Activated CD4-positive, alpha-beta memory T cell treated with anti-CD3 and anti-CD28 coated beads, Interleukin-2, amount 10 ng/mL, durations not matched to agents 7 days and 5 days (primary cell): ENCODE measurements at regions of chr2 and their contacts with region 1.

Region 1: GRCh38 chr2:219278655-219279516 is at the start of gene DNAJB2:
- DNase-seq: peak; percentile 99
- H3K4me3 Mint-ChIP-seq: peak within 1 kb of the TSS; percentile 87
- H3K27ac Mint-ChIP-seq: peak within 1 kb of the TSS; percentile 93
- H3K4me1 Mint-ChIP-seq: peaks cover 42% of the 10 kb centered on the region
- H3K27me3 Mint-ChIP-seq: peaks cover 3% of the 10 kb centered on the region
- total RNA-seq, gene DNAJB2: 57.0 to 59.7 TPM

Region 2: DNA sequence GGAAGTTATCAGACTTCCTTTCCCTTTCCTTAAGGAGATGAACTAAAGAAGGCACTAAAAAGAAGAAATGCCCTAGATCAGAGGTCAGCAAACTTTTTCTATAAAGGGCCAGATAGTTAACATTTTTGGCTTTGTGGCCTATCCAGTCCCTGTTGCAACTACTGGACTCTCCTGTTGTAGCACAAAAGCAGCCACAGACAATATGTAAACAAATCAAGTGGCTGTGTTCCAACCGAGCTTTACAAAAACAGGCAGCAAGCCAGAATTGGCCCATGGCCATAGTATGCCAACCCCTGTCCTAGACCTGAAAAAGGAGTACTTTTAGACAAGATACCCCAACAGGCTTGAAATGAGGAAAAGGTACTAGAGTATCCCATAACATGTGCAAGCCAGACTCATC is 129.2 kb before region 1 on chr2:
- CTCF ChIA-PET with region 1: no interaction called
- POLR2A ChIA-PET with region 1: no interaction called
- DNase-seq: no peak
- H3K4me3 Mint-ChIP-seq: no peak overlapping the region
- H3K27ac Mint-ChIP-seq: no peak overlapping the region
- H3K4me1 Mint-ChIP-seq: no peaks in the 10 kb centered on the region
- H3K27me3 Mint-ChIP-seq: no peaks in the 10 kb centered on the region

Region 3: DNA sequence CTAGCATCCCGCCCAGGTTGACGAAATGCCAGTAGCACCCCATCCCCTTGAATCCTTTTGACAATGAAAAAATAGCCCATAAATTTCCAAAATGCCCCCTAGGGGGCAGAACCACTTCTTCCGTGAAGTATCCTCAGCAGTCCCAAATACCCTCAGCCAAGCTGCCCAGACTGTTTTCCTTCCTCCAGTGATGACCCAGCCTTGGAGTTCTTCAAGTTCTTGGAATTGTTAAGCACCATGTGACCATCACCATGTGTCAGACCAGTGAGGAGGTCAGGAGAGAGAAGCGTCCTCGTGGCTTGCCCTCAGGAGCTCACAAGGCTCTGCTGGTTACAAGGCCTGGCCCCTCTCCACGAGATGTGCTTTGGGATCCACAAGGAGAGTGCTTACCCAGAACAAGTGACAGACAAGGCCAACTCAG is 107.6 kb before region 1 on chr2:
- CTCF ChIA-PET with region 1: interaction called, 14 read pairs
- POLR2A ChIA-PET with region 1: interaction called, 26 read pairs
- DNase-seq: peak; percentile 24
- H3K4me3 Mint-ChIP-seq: no peak overlapping the region
- H3K27ac Mint-ChIP-seq: no peak overlapping the region
- H3K4me1 Mint-ChIP-seq: peaks cover 42% of the 10 kb centered on the region
- H3K27me3 Mint-ChIP-seq: no peaks in the 10 kb centered on the region

Region 4: DNA sequence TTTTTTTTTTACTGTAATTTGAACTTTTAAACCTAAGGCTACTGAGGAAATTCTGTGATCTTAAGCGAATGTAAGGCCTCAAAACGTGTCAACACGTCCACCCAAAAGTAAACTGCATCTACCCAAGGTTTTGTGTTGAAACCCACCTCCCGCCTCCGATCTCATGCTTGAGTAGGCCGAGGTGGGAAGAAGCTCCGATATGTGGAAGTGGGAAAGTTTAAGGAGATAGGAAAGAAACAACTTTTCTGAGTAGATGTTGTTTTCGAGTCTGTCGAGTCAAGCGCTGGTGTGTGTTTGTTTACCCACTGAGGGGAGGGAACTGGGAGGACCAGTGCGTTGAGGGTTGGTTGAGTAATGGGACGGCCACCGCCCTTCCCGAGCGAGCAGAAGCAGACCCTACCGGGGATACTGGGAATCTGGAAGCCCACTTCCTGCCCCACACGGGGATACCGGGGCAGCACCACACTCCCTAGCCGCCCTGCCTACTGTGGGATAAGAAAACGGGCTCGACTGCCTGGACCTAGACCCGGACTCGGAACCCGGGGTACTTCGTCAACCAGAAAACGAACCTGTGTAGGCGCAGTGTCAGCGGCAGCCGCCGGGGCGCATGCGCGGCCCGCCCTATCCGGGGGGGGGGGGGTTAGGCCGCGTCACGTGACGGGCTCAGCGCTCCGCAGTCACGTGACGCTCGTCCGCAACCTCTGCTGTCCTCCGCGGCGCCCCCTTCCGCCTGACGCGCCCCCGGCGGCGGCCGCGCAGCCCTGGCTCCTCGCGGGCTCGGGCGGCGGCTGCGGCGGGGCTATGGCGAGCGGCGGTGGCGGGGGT is 101.1 kb before region 1 on chr2 and contains the start of gene RETREG2:
- CTCF ChIA-PET with region 1: interaction called, 5 read pairs
- POLR2A ChIA-PET with region 1: interaction called, 26 read pairs
- DNase-seq: peak; percentile 84
- H3K4me3 Mint-ChIP-seq: peak within 1 kb of the TSS; percentile 85
- H3K27ac Mint-ChIP-seq: peak within 1 kb of the TSS; percentile 99
- H3K4me1 Mint-ChIP-seq: peaks cover 72% of the 10 kb centered on the region
- H3K27me3 Mint-ChIP-seq: no peaks in the 10 kb centered on the region
- total RNA-seq, gene RETREG2: 107 to 113 TPM

Region 5: DNA sequence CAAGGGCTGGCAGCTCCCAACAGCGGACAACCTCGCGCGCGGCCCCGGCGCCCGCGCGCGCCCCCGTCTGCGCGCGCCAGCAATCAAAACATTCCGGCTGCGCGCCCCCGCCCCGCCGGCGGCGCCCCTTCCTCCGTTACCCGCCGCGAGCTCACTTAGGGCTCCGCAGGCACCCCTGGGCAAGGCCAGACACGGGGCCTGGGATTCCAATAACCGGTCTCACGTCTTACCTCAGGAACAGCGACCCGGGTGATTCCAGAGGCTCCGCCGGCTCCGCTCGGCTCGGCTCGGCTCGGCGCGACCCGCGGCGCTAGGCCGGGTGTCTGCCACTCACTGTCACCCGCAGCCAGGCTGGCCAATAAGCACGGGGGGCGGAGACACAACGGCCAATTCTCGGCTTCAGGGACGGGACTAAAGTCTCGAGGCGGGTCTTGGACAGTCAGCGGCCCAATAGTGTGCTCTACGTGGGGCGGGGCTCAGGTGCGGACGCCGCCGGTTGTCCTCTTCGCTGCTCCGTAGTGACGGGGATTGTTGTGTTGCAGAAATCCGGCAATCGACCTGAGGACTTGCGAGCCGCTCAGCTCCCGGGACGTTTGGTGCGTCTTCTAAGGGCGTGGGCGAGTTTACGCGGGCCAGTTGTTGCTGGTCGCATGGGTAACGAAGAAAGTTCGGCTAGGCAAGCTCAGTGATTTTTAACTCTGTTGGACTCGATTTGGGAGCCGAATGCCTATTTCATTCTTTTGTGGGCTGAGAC is 49.4 kb before region 1 on chr2 and contains the starts of genes ANKZF1 and ATG9A:
- CTCF ChIA-PET with region 1: interaction called, 15 read pairs
- POLR2A ChIA-PET with region 1: interaction called, 14 read pairs
- DNase-seq: peak; percentile 99
- H3K4me3 Mint-ChIP-seq: peak within 1 kb of the TSS; percentile 99
- H3K27ac Mint-ChIP-seq: peak within 1 kb of the TSS; percentile 100
- H3K4me1 Mint-ChIP-seq: peaks cover 56% of the 10 kb centered on the region
- H3K27me3 Mint-ChIP-seq: no peaks in the 10 kb centered on the region
- total RNA-seq, gene ANKZF1: 121 to 122 TPM
- total RNA-seq, gene ATG9A: 58.9 to 60.7 TPM

Region 6: DNA sequence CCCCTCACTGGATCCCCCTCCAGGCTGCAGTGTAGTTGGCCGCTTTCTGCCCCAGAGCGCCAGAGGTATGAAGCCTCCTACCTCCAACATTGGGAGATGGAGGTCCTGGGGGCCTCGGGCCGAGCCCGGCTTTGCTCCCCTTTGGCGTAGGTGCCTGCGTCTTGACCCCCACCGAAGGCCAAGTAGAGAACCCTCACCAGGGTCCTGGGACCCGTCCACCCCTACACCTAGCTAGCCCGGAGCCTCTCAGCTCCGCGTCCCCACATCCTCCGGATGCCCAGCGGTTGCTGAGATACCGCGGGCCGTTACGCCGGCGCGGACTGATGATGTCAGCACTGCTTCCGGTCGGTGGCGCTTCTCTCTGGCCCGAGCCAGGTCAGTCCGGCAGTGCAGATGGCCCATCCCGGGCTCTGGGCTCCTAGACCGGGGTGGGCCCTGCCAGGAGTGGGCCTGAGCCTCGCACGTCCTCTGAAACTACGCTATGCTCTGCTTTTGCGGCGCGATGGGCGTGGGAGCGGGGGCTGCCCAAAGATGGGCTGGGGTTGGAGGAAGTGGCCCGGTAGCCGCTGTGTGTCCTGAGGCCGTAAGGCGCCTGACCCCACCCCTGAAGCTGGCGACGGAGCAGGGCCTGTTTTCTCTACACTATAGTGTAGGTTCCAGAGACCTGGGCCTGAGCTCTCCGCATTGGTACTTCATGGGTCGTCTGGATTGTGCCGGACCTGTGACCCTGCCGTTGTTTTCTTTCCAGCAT is 33.6 kb before region 1 on chr2 and contains the starts of genes GLB1L and STK16:
- CTCF ChIA-PET with region 1: interaction called, 22 read pairs
- POLR2A ChIA-PET with region 1: interaction called, 28 read pairs
- DNase-seq: peak; percentile 92
- H3K4me3 Mint-ChIP-seq: peak within 1 kb of the TSS; percentile 100
- H3K27ac Mint-ChIP-seq: peak within 1 kb of the TSS; percentile 81
- H3K4me1 Mint-ChIP-seq: peaks cover 66% of the 10 kb centered on the region
- H3K27me3 Mint-ChIP-seq: no peaks in the 10 kb centered on the region
- total RNA-seq, gene GLB1L: 6.2 to 7.3 TPM
- total RNA-seq, gene STK16: 41.6 to 42.3 TPM

Region 7: DNA sequence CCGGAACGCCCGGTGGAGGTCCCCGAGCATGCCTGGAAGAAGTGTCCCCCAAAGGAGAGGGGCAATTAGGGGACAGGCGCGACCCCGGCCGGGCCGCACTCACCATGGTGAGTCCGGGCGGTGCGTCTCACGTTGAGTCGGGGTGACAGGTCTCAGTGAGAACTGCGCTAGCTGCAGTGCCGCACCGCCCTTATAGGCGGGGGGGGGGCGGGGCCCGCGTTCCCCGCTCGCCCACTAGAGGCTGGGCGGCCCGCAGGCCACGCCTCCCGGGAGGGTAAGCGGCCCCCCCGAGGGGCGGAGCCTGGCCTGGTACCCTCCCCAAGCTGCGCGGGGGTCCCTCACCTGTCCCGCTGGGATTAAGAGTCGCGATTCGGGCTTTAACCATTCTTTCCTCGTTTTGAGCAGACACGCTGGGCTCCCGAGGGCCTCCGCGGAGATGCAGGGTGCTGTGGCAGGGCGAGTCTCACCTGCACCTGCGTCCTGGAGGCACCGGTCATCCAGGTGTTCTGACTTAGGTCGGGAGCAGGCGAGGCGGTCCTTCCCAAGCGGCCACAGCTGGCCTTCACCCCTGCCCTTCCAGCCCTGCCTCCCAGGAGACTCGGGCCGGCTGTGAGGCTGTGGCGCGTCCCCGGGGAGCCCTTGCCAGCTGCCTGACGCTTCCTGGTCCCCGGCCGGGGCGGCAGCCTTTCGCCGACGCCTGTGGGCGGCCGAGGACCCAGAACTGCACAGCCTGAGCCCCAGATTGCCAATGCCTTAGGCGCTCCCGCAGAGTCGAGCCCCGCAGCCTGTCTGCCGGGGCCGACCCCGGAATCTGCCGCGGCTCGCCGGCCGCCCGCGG is 24.9 kb before region 1 on chr2 and contains the start of gene TUBA4A:
- CTCF ChIA-PET with region 1: interaction called, 30 read pairs
- POLR2A ChIA-PET with region 1: interaction called, 131 read pairs
- DNase-seq: peak; percentile 92
- H3K4me3 Mint-ChIP-seq: peak within 1 kb of the TSS; percentile 100
- H3K27ac Mint-ChIP-seq: peak within 1 kb of the TSS; percentile 81
- H3K4me1 Mint-ChIP-seq: peaks cover 47% of the 10 kb centered on the region
- H3K27me3 Mint-ChIP-seq: peaks cover 2% of the 10 kb centered on the region
- total RNA-seq, gene TUBA4A: 313 to 344 TPM

Region 8: GRCh38 chr2:219308142-219309093 is 29.5 kb after region 1 on chr2:
- CTCF ChIA-PET with region 1: no interaction called
- POLR2A ChIA-PET with region 1: no interaction called
- DNase-seq: peak; percentile 74
- H3K4me3 Mint-ChIP-seq: no peak overlapping the region
- H3K27ac Mint-ChIP-seq: no peak overlapping the region
- H3K4me1 Mint-ChIP-seq: no peaks in the 10 kb centered on the region
- H3K27me3 Mint-ChIP-seq: peaks cover 60% of the 10 kb centered on the region

Region 9: GRCh38 chr2:219327719-219328118 is 48.8 kb after region 1 on chr2:
- CTCF ChIA-PET with region 1: no interaction called
- POLR2A ChIA-PET with region 1: no interaction called
- DNase-seq: no peak
- H3K4me3 Mint-ChIP-seq: no peak overlapping the region
- H3K27ac Mint-ChIP-seq: no peak overlapping the region
- H3K4me1 Mint-ChIP-seq: no peaks in the 10 kb centered on the region
- H3K27me3 Mint-ChIP-seq: peaks cover 32% of the 10 kb centered on the region

Region 10: DNA sequence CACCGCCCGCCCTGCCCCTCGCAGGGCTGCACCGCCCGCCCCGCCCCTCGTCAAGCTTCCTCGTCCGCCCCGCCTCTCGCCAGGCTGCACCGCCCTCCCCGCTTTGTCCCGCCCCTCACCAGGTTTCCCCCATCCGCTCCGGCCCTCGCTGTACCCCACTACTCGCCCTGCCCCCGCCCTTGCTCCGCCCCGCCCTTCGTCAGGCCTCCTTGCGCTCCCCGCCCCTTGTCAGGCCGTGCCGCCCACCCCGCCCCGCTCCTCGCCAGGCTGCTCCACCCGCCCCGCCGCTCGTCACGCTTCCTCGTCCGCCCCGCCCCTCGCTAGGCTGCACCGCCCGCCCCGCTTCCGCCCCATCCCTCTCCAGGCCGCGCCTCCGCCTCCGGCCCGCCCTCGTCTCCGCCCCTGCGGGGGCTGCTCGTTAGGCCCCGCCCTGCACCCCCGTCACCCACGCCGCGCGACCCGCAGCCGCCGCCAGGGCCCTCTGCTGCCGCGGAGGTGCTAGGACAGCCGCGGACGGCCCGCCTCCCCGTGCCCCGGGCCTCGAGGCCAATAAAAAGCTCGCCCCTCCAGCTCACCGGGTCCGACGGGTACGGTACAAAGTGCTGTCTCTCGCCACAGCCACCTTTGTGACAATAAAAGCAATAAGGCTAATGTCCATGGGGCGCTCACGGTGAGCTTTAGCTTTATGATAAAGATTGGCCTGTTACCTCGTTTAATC is 109.4 kb after region 1 on chr2:
- CTCF ChIA-PET with region 1: interaction called, 4 read pairs
- POLR2A ChIA-PET with region 1: interaction called, 14 read pairs
- DNase-seq: peak; percentile 98
- H3K4me3 Mint-ChIP-seq: peak overlapping the region; percentile 70
- H3K27ac Mint-ChIP-seq: peak overlapping the region; percentile 67
- H3K4me1 Mint-ChIP-seq: peaks cover 16% of the 10 kb centered on the region
- H3K27me3 Mint-ChIP-seq: peaks cover 9% of the 10 kb centered on the region